Activated naive CD8-positive, alpha-beta T cell treated with anti-CD3 and anti-CD28 coated beads, Interleukin-2, amount 10 ng/mL, durations not matched to agents 7 days and 5 days (primary cell): ENCODE measurements at regions of chr6 and their contacts with region 1.

Region 1: GRCh38 chr6:149717588-149718458 is at the start of gene LATS1:
- DNase-seq: peak; percentile 97
- ATAC-seq: peak; percentile 90
- H3K4me3 Mint-ChIP-seq: peak within 1 kb of the TSS; percentile 95
- H3K27ac Mint-ChIP-seq: peak within 1 kb of the TSS; percentile 98
- H3K4me1 Mint-ChIP-seq: peaks cover 28% of the 10 kb centered on the region
- H3K27me3 Mint-ChIP-seq: no peaks in the 10 kb centered on the region
- total RNA-seq, gene LATS1: 37.7 to 38.5 TPM

Region 2: GRCh38 chr6:149545754-149546528 is 171.9 kb before region 1 on chr6 and contains the start of gene PPIL4:
- POLR2A ChIA-PET with region 1: interaction called, 19 read pairs
- DNase-seq: peak; percentile 98
- ATAC-seq: peak; percentile 86
- H3K4me3 Mint-ChIP-seq: peak within 1 kb of the TSS; percentile 94
- H3K27ac Mint-ChIP-seq: peak within 1 kb of the TSS; percentile 97
- H3K4me1 Mint-ChIP-seq: peaks cover 26% of the 10 kb centered on the region
- H3K27me3 Mint-ChIP-seq: peaks cover 3% of the 10 kb centered on the region
- total RNA-seq, gene PPIL4: 24.2 to 24.9 TPM

Region 3: GRCh38 chr6:149727793-149728498 is 10.1 kb after region 1 on chr6:
- POLR2A ChIA-PET with region 1: interaction called, 14 read pairs
- DNase-seq: no peak
- ATAC-seq: peak; percentile 62
- H3K4me3 Mint-ChIP-seq: peak overlapping the region; percentile 67
- H3K27ac Mint-ChIP-seq: peak overlapping the region; percentile 88
- H3K4me1 Mint-ChIP-seq: peaks cover 15% of the 10 kb centered on the region
- H3K27me3 Mint-ChIP-seq: no peaks in the 10 kb centered on the region

Region 4: GRCh38 chr6:149746147-149746946 is 28.5 kb after region 1 on chr6 and contains the start of gene NUP43:
- POLR2A ChIA-PET with region 1: interaction called, 51 read pairs
- DNase-seq: peak; percentile 92
- ATAC-seq: peak; percentile 67
- H3K4me3 Mint-ChIP-seq: peak within 1 kb of the TSS; percentile 98
- H3K27ac Mint-ChIP-seq: peak within 1 kb of the TSS; percentile 91
- H3K4me1 Mint-ChIP-seq: peaks cover 23% of the 10 kb centered on the region
- H3K27me3 Mint-ChIP-seq: no peaks in the 10 kb centered on the region
- total RNA-seq, gene NUP43: 61.2 to 67.6 TPM